IMR-90 (cell line): ENCODE measurements at regions of chr6 and their contacts with region 1.

Region 1: GRCh38 chr6:140052756-140053729 is 678.6 kb upstream of the CITED2 start:
- DNase-seq: peak; percentile 59
- ATAC-seq: no peak; the same call in 1 of the 2 replicates
- H3K4me3 ChIP-seq: no peak overlapping the region
- H3K27ac ChIP-seq: peak overlapping the region; percentile 18
- H3K4me1 ChIP-seq: peaks cover 12% of the 10 kb centered on the region
- H3K27me3 ChIP-seq: no peaks in the 10 kb centered on the region
- CTCF ChIP-seq: peak; percentile 44
- POLR2A ChIP-seq: no peak
- RAD21 ChIP-seq: peak; percentile 52

Region 2: DNA sequence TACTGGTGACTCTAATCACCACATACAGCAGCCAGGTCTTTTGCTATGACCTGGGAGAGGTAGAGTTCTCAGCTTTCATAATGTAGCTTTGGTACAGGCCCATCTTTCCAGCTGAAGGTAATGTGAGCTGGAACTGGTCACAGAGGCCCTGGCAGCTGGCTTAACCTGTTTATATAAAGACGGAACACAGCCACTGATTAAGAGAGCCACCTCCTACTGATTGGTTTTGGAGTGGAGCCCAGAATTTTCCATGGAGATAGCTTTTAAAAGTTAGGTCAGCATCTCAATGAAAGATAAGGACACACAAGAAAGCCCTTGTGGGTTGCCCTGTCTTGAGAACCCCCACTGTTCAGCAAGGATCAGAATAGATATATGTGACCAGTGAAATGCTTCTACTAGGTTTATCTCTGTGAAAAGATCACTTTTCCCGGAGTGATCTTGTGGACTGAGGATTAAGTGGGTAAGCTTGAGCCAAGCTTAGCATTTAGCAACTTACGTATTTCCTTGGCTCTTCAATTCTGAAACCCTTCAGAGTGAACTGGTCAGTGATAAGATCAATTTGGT is 464.9 kb before region 1 on chr6:
- CTCF ChIA-PET with region 1: no interaction called
- POLR2A ChIA-PET with region 1: no interaction called
- dilution Hi-C with region 1: no loop called
- in situ Hi-C with region 1: loop called (anchors 10 kb)
- intact Hi-C with region 1: loop called (anchors 5 kb)
- DNase-seq: peak; percentile 65
- ATAC-seq: peak; percentile 22
- H3K4me3 ChIP-seq: no peak overlapping the region
- H3K27ac ChIP-seq: peak overlapping the region; percentile 97
- H3K4me1 ChIP-seq: peaks cover 14% of the 10 kb centered on the region
- H3K27me3 ChIP-seq: no peaks in the 10 kb centered on the region
- CTCF ChIP-seq: no peak
- POLR2A ChIP-seq: no peak
- RAD21 ChIP-seq: no peak

Region 3: GRCh38 chr6:139881728-139882211 is 171.3 kb before region 1 on chr6:
- CTCF ChIA-PET with region 1: interaction called, 3 read pairs
- POLR2A ChIA-PET with region 1: no interaction called
- dilution Hi-C with region 1: no loop called
- in situ Hi-C with region 1: no loop called
- intact Hi-C with region 1: loop called (anchors 5 kb)
- DNase-seq: peak; percentile 53
- ATAC-seq: peak; percentile 76
- H3K4me3 ChIP-seq: peak overlapping the region; percentile 31; the same call in 1 of the 2 replicates
- H3K27ac ChIP-seq: peak overlapping the region; percentile 60
- H3K4me1 ChIP-seq: peaks cover 13% of the 10 kb centered on the region
- H3K27me3 ChIP-seq: no peaks in the 10 kb centered on the region
- CTCF ChIP-seq: peak; percentile 43
- POLR2A ChIP-seq: no peak
- RAD21 ChIP-seq: peak; percentile 54

Region 4: DNA sequence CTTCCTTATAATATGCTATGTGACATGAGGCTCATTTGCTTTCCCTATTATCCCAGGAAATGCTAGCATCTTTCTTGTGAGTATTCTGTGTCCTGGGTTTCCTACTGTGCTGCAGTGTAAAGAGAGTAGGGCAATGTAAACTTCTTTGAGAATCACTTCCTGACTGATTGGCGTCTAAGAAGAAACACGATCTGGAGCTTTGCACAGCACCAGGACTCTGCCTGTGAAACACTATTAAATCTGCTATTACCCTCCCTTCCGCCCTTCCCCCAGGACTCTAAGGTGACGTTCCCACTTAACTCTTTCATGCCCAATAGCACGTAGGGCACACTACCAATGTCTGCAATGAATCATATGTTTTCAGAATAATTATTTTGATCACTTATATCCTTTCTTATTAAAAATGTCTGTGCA is 71.3 kb before region 1 on chr6:
- CTCF ChIA-PET with region 1: interaction called, 3 read pairs
- POLR2A ChIA-PET with region 1: interaction called, 4 read pairs
- dilution Hi-C with region 1: no loop called
- in situ Hi-C with region 1: no loop called
- intact Hi-C with region 1: loop called (anchors 2 kb)
- DNase-seq: peak; percentile 80
- ATAC-seq: peak; percentile 62
- H3K4me3 ChIP-seq: no peak overlapping the region
- H3K27ac ChIP-seq: peak overlapping the region; percentile 49; the same call in 1 of the 2 replicates
- H3K4me1 ChIP-seq: peaks cover 29% of the 10 kb centered on the region
- H3K27me3 ChIP-seq: no peaks in the 10 kb centered on the region
- CTCF ChIP-seq: no peak
- POLR2A ChIP-seq: no peak
- RAD21 ChIP-seq: no peak